Activated B cell treated with CpG ODN at 0.5 μM for 24 hours (primary cell): ENCODE measurements at regions of chr5 and their contacts with region 1.

Region 1: DNA sequence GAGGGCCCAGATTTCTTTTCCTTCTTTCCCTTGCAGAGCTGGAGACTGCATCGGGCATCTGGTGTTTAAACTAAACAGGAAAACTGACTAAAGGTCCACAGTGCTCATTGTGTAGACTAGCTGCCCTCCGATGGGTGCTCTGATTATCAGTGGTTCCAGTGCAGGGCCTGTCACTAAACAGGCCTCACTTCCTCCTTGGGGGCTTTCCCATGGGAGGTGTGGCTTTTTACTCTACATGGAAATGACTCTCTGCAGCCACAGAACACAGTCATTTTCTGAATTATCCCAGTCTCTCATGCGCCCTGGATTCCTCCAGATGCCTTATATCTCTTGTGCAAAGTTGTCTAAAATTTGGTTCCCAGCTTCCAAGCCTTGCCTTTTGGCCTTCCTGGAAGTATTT is 199.2 kb downstream of the TRIO start:
- DNase-seq: peak; percentile 33
- ATAC-seq: peak; percentile 99
- H3K4me3 Mint-ChIP-seq: peak overlapping the region; percentile 30
- H3K27ac Mint-ChIP-seq: peak overlapping the region; percentile 75
- H3K4me1 Mint-ChIP-seq: peaks cover 45% of the 10 kb centered on the region
- H3K27me3 Mint-ChIP-seq: no peaks in the 10 kb centered on the region
- CTCF ChIP-seq: no peak

Region 2: GRCh38 chr5:14108170-14108996 is 233.9 kb before region 1 on chr5:
- CTCF ChIA-PET with region 1: no interaction called
- POLR2A ChIA-PET with region 1: no interaction called
- intact Hi-C with region 1: loop called (anchors 5 kb)
- DNase-seq: no peak
- ATAC-seq: peak; percentile 85
- H3K4me3 Mint-ChIP-seq: peak overlapping the region; percentile 76
- H3K27ac Mint-ChIP-seq: peak overlapping the region; percentile 80
- H3K4me1 Mint-ChIP-seq: peaks cover 40% of the 10 kb centered on the region
- H3K27me3 Mint-ChIP-seq: peaks cover 1% of the 10 kb centered on the region
- CTCF ChIP-seq: no peak

Region 3: GRCh38 chr5:14331386-14331781 is 10.9 kb before region 1 on chr5:
- CTCF ChIA-PET with region 1: no interaction called
- POLR2A ChIA-PET with region 1: no interaction called
- intact Hi-C with region 1: loop called (anchors 1 kb)
- DNase-seq: no peak
- ATAC-seq: peak; percentile 92
- H3K4me3 Mint-ChIP-seq: peak overlapping the region; percentile 74
- H3K27ac Mint-ChIP-seq: peak overlapping the region; percentile 89
- H3K4me1 Mint-ChIP-seq: peaks cover 57% of the 10 kb centered on the region
- H3K27me3 Mint-ChIP-seq: no peaks in the 10 kb centered on the region
- CTCF ChIP-seq: no peak

Region 4: DNA sequence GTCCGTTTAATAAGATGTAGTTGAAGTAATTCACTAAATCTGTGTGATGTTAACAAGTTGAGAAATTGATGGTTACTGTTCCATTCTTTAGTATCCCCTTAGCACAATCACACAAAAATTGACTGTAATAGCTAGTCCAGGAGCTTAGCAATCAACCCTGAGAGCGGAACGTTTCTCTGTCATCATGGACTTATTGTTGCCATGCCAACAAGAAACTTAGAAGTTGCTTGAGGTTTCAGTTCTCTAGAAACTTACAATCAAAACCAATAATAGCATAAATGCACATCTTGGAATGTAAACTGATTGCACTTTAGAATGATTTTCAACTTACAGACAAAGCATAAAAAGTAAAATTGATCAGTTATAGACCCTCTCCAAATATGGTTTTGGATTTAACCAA is 654.7 kb after region 1 on chr5:
- CTCF ChIA-PET with region 1: no interaction called
- POLR2A ChIA-PET with region 1: no interaction called
- intact Hi-C with region 1: loop called (anchors 10 kb)
- DNase-seq: no peak
- ATAC-seq: peak; percentile 76
- H3K4me3 Mint-ChIP-seq: peak overlapping the region; percentile 15
- H3K27ac Mint-ChIP-seq: peak overlapping the region; percentile 75
- H3K4me1 Mint-ChIP-seq: peaks cover 59% of the 10 kb centered on the region
- H3K27me3 Mint-ChIP-seq: no peaks in the 10 kb centered on the region
- CTCF ChIP-seq: no peak